ENCODE measurements at regions of chr7 and their contacts with region 1.

Region 1: DNA sequence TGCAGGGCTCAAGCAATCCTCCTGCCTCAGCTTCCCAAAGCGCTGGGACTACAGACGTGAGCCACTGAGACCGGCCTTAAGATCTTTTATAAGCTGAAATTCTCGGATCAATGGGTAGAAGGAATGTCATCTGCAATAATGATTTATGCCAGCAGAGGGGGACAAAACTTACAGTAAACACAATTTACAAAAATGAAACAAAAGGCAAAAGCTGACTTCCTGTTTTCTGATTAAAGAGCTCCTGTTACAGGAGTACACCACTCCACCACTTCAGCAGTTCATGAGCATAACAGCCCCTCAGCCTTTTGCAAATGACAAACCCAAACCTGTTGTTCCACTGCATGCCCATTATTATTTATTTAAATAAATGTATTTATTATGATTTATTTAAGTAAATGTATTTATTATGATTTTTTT is 88.5 kb upstream of the ATP6V0A4 start:
- DNase-seq: peak; percentile 45 to 56
- H3K4me3 ChIP-seq: no peak overlapping the region
- H3K27ac ChIP-seq: no peak overlapping the region
- H3K4me1 ChIP-seq: peaks cover 26% of the 10 kb centered on the region
- H3K27me3 ChIP-seq: no peaks in the 10 kb centered on the region
- CTCF ChIP-seq: peak; percentile 85

Region 2: GRCh38 chr7:138752568-138753518 is 133.7 kb before region 1 on chr7:
- CTCF ChIA-PET with region 1: interaction called, 3 read pairs
- POLR2A ChIA-PET with region 1: no interaction called
- intact Hi-C with region 1: loop called (anchors 1 kb)
- DNase-seq: peak; percentile 97 to 100
- H3K4me3 ChIP-seq: no peak overlapping the region
- H3K27ac ChIP-seq: peak overlapping the region; percentile 95
- H3K4me1 ChIP-seq: peaks cover 73% of the 10 kb centered on the region
- H3K27me3 ChIP-seq: no peaks in the 10 kb centered on the region
- CTCF ChIP-seq: no peak

Region 3: DNA sequence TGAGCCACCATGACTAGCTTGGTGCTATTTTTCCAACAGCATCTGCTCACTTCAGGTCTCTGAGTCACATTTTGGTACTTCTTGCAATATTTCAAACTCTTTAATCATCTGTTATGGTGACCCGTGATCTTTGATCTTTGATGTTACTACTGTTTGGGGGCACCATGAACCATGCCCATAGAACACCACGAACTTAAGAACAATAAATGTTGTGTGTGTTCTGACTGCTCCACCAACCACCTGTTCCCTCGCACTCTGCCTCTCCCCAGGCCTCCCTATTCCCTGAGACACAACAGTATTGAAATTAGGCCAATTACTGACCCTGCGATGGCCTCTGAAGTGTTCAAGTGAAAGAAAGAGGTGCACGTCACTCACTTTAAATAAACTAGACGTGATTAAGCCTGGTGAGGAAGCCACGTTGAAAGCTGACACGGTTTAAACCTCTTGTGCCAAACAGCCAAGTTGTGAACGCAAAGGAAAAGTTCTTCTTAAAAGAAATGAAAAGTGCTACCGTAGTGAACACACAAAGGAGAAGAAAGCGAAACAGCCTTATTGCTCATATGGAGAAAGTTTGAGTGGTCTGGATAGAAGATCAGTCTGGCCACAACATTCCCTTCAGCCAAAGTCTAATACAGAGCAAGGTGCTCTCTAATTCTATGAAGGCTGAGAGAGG is 61.3 kb before region 1 on chr7:
- CTCF ChIA-PET with region 1: no interaction called
- POLR2A ChIA-PET with region 1: no interaction called
- intact Hi-C with region 1: no loop called
- DNase-seq: no peak
- H3K4me3 ChIP-seq: no peak overlapping the region
- H3K27ac ChIP-seq: no peak overlapping the region
- H3K4me1 ChIP-seq: no peaks in the 10 kb centered on the region
- H3K27me3 ChIP-seq: no peaks in the 10 kb centered on the region
- CTCF ChIP-seq: no peak

Region 4: DNA sequence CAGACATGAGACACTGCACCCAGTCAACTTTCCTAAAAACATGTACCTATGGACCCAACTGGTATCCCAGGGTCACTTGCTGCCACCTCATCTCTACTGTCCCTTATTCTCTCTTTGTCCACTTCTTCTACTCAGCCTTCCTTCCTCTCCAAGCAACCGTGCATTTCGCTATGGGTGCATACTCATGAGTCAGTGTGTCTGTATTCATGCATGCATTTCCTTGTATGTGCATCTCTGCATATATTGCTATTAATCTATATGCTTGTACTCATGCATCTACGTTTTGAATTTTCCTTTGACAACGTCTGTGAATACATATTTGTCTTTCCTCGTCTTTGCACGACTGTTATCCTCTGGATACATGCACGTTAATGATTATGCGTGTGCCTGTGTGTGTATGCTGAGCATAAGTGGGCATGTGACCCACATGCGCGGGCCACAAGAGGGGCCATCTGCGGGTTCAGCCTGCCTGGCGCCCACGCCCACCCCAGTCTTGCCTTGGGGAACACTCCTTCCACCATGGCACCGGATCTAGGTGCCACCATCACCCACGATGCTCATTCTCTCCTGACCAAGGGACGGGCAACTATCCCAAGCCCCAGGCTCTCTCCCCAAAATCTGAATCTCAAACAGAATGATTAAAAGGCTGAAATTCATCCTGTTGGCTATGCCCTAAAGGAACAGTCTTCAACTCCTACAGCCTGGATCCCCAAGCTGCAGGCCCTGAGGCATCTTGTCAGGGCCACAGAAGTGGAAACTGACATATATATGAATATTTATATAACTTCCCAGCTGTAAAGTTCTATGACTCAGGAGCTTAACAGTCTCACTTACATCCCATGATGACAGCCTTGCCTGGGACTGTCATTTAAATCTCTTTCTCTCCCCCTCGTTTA is 71.5 kb after region 1 on chr7:
- CTCF ChIA-PET with region 1: no interaction called
- POLR2A ChIA-PET with region 1: interaction called, 4 read pairs
- intact Hi-C with region 1: loop called (anchors 1 kb)
- DNase-seq: no peak
- H3K4me3 ChIP-seq: no peak overlapping the region
- H3K27ac ChIP-seq: peak overlapping the region; percentile 42
- H3K4me1 ChIP-seq: peaks cover 21% of the 10 kb centered on the region
- H3K27me3 ChIP-seq: no peaks in the 10 kb centered on the region
- CTCF ChIP-seq: no peak

Region 5: GRCh38 chr7:139043823-139044812 is 157.6 kb after region 1 on chr7:
- CTCF ChIA-PET with region 1: no interaction called
- POLR2A ChIA-PET with region 1: no interaction called
- intact Hi-C with region 1: loop called (anchors 2 kb)
- DNase-seq: peak; percentile 88 to 91
- H3K4me3 ChIP-seq: peak overlapping the region; percentile 23; the same call in 1 of the 2 replicates
- H3K27ac ChIP-seq: peak overlapping the region; percentile 82
- H3K4me1 ChIP-seq: peaks cover 26% of the 10 kb centered on the region
- H3K27me3 ChIP-seq: no peaks in the 10 kb centered on the region
- CTCF ChIP-seq: no peak

Region 6: DNA sequence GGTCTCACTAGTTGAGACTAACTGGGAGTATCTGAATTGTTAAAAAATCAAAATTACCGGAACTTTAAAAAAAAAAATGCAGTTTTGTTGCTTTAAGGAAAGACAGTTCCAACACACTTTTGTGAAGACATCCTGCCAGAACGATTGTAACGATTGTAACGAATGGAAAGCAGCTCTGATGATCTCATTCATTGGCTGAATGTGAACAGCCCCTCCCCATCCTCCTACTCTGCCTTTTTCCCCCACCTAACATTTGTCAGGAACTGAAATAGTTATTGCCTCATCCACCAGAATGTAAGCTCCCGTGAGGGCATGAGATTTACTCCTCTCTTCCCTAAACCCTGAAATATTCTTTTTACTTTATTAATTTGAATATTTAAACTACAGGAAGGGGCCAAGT is 172.4 kb after region 1 on chr7:
- CTCF ChIA-PET with region 1: no interaction called
- POLR2A ChIA-PET with region 1: no interaction called
- intact Hi-C with region 1: no loop called
- DNase-seq: no peak
- H3K4me3 ChIP-seq: no peak overlapping the region
- H3K27ac ChIP-seq: no peak overlapping the region
- H3K4me1 ChIP-seq: no peaks in the 10 kb centered on the region
- H3K27me3 ChIP-seq: no peaks in the 10 kb centered on the region
- CTCF ChIP-seq: no peak

Region 7: GRCh38 chr7:139230774-139231512 is 344.4 kb after region 1 on chr7 and contains the start of gene UBN2:
- CTCF ChIA-PET with region 1: no interaction called
- POLR2A ChIA-PET with region 1: no interaction called
- intact Hi-C with region 1: loop called (anchors 5 kb)
- DNase-seq: peak; percentile 97
- H3K4me3 ChIP-seq: peak within 1 kb of the TSS; percentile 98
- H3K27ac ChIP-seq: peak within 1 kb of the TSS; percentile 41
- H3K4me1 ChIP-seq: peaks cover 37% of the 10 kb centered on the region
- H3K27me3 ChIP-seq: no peaks in the 10 kb centered on the region
- CTCF ChIP-seq: no peak
- total RNA-seq, gene UBN2: 20.3 and 34.1 TPM in 2 replicates

Measured in PC-9 (cell line).